PC-9 (cell line): ENCODE measurements at regions of chr2 and their contacts with region 1.

Region 1: GRCh38 chr2:233690435-233690834 is 2.3 kb upstream of the UGT1A6 start:
- DNase-seq: peak; percentile 96 to 99
- H3K4me3 ChIP-seq: peak overlapping the region; percentile 69; the same call in 1 of the 2 replicates
- H3K27ac ChIP-seq: peak overlapping the region; percentile 97
- H3K4me1 ChIP-seq: peaks cover 37% of the 10 kb centered on the region
- H3K27me3 ChIP-seq: no peaks in the 10 kb centered on the region
- CTCF ChIP-seq: no peak

Region 2: DNA sequence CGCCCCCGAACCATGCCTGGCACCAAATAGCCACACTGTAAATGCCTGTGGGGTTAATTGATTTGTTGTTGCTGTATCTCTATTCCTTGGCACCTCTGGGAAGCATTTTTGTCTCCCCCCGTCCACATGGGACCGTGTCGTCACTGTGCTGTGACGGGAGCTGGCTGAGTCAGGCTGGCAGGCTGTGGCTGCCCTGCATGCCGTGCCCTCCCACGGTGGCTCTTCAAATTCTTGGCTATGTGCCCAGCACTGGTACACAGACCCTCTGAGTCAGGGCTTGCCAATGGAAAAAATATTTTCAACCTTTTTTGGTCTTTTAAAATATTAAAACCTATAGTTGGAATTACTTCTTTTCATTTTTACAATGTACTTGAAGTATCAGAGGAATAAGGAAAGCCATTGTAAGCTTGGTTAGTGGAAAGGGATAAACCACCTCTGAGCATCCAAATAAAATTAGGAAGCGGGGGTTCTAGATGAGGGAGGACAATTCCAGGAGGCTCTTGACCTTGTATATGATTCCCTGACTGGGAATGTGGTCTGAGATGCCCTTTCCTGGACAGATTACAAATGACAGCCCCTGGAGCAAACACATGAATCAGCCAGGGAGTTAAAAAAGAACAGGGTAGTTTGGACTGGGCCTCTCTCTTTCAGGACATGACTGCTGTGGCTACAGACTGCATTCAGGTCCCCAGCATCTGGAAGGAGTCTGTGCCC is 276.7 kb before region 1 on chr2:
- CTCF ChIA-PET with region 1: no interaction called
- POLR2A ChIA-PET with region 1: interaction called, 7 read pairs
- intact Hi-C with region 1: loop called (anchors 5 kb)
- DNase-seq: peak; percentile 93
- H3K4me3 ChIP-seq: peak overlapping the region; percentile 18; the same call in 1 of the 2 replicates
- H3K27ac ChIP-seq: peak overlapping the region; percentile 88
- H3K4me1 ChIP-seq: peaks cover 38% of the 10 kb centered on the region
- H3K27me3 ChIP-seq: no peaks in the 10 kb centered on the region
- CTCF ChIP-seq: no peak

Region 3: DNA sequence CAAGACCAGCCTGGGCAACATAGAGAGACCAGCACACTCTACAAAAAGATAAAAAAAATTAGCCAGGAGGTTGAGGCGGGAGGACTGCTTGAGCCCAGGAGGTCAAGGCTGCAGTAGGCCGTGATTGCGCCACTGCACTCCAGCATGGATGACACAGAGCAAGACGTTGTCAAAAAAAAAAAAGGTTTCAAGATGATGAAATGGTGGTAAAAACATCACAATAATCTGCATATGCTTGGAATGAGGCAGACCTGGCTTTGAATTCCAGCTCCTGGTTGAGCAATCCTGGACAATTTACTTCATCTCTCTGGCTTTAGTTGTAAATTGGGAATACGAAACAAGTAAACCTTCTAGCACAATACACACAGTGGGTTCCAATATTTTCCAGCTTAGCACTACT is 147.9 kb before region 1 on chr2:
- CTCF ChIA-PET with region 1: no interaction called
- POLR2A ChIA-PET with region 1: interaction called, 12 read pairs
- intact Hi-C with region 1: no loop called
- DNase-seq: peak in 1 of 2 experiments; percentile 65
- H3K4me3 ChIP-seq: no peak overlapping the region
- H3K27ac ChIP-seq: no peak overlapping the region
- H3K4me1 ChIP-seq: 0 out of 2 replicates have a peak, but pooled peaks cover 3% of the 10 kb centered on the region
- H3K27me3 ChIP-seq: no peaks in the 10 kb centered on the region
- CTCF ChIP-seq: no peak

Region 4: DNA sequence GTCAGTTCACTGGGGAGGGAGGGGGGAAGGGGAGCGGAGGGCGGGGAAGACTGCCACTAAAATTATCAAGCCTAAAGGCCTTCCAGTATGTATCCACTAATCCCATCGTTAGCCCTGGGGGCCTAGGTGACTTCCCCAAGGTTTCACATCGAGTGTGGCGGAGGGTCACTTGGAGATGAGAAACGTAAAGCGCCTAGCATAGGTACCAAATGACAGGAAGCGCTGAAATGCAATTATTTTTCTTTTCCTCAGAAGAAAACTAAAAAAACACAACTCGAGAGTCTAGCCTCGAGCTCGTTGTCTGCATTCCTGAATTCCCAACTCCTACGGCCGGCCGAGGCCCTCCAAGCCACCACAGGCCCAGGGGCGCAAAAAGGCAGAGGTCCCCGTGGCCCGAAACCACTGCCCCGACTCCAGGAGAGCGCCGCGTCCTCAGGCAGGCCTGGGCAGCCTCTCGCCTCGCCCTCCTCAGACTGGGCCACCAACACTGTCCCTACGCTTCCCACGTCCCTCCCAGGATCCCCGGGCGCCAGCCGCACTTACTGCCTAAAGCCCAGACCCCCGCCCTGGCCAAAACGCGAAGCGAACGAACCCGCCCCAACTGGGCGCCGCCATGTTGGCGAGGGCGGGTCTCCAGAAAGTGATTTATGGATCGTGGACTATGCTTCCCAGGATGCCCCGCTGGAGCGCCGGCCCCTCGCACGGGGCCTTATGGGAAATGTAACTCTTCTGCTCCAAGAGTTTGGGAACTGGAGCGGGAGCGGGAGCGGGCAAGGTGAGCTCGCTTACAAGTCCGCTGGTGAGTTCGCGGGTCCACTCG is 124.1 kb before region 1 on chr2 and contains the start of gene USP40:
- CTCF ChIA-PET with region 1: no interaction called
- POLR2A ChIA-PET with region 1: interaction called, 24 read pairs
- intact Hi-C with region 1: loop called (anchors 1 kb)
- DNase-seq: peak; percentile 89 to 93
- H3K4me3 ChIP-seq: peak within 1 kb of the TSS; percentile 91
- H3K27ac ChIP-seq: peak within 1 kb of the TSS; percentile 88
- H3K4me1 ChIP-seq: peaks cover 18% of the 10 kb centered on the region
- H3K27me3 ChIP-seq: no peaks in the 10 kb centered on the region
- CTCF ChIP-seq: no peak
- total RNA-seq, gene USP40: 116 and 127 TPM in 2 replicates

Region 5: GRCh38 chr2:233658610-233659009 is 31.8 kb before region 1 on chr2:
- CTCF ChIA-PET with region 1: no interaction called
- POLR2A ChIA-PET with region 1: no interaction called
- intact Hi-C with region 1: no loop called
- DNase-seq: peak in 1 of 2 experiments; percentile 29
- H3K4me3 ChIP-seq: no peak overlapping the region
- H3K27ac ChIP-seq: no peak overlapping the region
- H3K4me1 ChIP-seq: peaks cover 7% of the 10 kb centered on the region
- H3K27me3 ChIP-seq: no peaks in the 10 kb centered on the region
- CTCF ChIP-seq: no peak

Region 6: DNA sequence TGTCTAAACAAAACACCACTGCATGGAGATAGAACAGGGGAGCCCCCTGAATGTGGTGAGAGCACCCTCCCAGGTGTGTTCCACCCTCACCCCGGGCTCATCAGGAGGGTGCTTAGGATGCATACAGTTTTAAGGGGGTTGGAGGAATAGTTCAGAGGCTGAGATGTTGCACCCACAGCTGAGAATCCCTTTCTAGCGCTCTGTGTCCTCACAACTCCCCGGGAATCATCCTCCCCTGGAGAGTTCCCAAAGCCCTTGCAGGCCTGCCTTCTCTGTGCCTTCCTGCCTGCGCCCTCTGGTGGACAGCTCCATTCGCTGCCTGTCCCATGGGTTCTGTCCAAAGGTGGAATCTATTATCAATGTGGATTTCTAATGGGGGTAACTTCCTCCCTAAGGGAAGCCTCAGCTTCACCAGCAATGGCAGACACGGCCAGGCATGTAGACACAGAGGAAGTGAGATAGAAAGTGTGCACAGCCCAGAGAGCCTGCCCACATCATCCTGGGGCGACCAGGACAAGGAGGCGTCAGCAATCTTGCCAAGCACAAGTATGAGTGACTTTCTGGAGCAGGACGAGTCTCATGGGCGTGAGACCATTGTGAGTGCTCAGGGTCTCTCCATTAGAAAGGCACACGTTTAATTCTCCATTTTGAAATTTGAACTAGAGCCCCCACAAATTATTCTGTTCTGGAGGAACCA is 21.0 kb after region 1 on chr2:
- CTCF ChIA-PET with region 1: no interaction called
- POLR2A ChIA-PET with region 1: interaction called, 53 read pairs
- intact Hi-C with region 1: loop called (anchors 1 kb)
- DNase-seq: peak; percentile 56 to 80
- H3K4me3 ChIP-seq: no peak overlapping the region
- H3K27ac ChIP-seq: peak overlapping the region; percentile 22; the same call in 1 of the 2 replicates
- H3K4me1 ChIP-seq: peaks cover 55% of the 10 kb centered on the region
- H3K27me3 ChIP-seq: no peaks in the 10 kb centered on the region
- CTCF ChIP-seq: peak; percentile 96

Region 7: GRCh38 chr2:234241656-234242458 is 551.4 kb after region 1 on chr2:
- CTCF ChIA-PET with region 1: no interaction called
- POLR2A ChIA-PET with region 1: no interaction called
- intact Hi-C with region 1: loop called (anchors 10 kb)
- DNase-seq: peak; percentile 68 to 95
- H3K4me3 ChIP-seq: peak overlapping the region; percentile 36; the same call in 1 of the 2 replicates
- H3K27ac ChIP-seq: peak overlapping the region; percentile 91
- H3K4me1 ChIP-seq: peaks cover 68% of the 10 kb centered on the region
- H3K27me3 ChIP-seq: no peaks in the 10 kb centered on the region
- CTCF ChIP-seq: no peak